ENCODE measurements at regions of chr20 and their contacts with region 1.

Region 1: DNA sequence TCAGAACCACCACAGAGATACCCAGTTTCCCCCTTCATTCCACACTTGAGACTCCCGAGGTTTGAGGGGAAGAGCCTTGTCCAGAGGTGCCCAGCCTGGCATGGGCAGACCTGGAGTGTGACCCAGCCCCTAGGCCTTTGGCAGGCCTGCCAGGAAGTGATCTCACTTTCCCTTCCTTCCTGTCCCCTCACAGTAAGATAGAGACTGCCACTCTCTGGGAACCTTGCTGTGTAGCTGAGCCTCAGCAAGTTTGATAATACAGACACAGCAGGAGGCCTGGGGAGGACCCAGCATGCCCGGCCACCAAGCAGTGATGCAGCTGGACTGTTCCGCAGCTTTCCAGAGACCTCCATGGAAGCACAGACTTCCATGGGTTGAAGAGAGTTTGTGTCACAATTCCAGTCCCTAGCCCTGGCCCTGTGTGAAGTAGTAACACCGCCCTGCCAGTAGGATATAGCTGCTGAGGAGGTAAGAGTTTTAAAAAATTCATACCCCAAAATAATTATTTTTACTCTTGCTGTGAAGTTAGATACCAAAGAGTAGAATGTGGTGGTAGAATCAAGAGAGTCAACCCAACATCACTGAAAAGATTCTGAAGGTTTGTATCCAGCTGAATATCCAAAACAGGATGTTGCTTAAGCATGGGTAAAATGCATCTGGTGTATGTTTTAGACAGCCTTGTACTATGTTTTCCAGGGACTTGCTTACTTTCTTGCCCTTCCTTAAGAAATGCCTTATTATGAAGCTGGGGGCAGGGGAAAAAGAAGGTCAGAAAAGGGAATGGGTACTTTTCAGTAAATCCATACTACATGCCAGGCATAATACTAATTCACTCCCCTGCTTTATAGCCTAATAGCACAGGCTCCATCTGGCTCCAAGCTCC is 16.3 kb downstream of the PKIG start:
- DNase-seq: peak; percentile 92
- H3K4me3 ChIP-seq: no peak overlapping the region
- H3K27ac ChIP-seq: peak overlapping the region; percentile 81
- H3K4me1 ChIP-seq: peaks cover 47% of the 10 kb centered on the region
- H3K27me3 ChIP-seq: no peaks in the 10 kb centered on the region
- CTCF ChIP-seq: peak; percentile 36; the same call in 1 of the 2 replicates

Region 2: DNA sequence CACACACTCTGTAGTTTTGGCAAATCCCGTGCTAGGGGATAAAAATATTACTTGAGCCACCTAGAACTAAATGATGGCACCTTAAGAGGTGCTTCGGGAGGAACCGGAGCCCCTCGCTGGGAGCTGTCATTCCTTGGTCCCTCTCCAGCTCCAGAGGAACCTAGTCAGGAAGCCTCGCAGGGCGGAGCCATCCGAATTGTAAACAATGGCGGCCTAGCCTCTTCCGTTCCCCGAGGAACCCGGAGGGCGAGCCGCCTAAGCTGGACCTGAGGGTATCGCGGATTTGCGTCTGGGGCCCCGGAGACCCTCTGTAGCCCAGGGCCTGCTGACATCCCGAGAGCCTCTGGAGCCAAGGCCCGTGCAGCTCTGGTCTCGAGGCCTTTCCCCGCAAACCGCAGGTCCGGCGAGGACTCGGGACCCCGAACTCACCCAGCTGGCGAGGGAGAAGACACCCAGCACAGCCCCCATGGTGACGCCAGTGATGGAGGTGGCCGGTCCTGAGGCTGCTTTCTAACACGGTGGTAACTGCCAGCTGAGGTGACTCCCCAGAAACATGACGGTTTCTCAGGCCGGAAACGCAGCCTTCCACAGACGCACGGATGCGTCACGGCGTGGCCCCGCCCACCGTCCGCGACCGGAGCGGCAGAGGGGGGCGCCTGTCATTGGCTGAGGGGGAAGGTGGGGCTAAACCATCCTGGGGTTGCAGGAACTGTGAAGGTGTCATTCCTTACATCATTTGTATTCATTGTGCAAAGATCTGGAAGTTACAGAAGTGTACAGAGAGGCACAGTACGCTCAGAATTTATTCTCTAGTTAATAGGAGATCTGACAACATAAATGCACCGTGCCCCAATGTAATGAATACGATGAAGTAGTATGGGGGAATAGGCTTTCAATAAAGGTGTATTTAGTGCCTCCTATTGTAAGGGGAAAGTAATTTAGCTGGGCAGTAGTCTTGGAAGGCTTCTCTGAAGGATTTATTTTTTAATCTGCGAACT is 76.9 kb before region 1 on chr20 and contains the start of gene SERINC3:
- CTCF ChIA-PET with region 1: no interaction called
- POLR2A ChIA-PET with region 1: no interaction called
- intact Hi-C with region 1: loop called (anchors 5 kb)
- DNase-seq: peak; percentile 96
- H3K4me3 ChIP-seq: peak within 1 kb of the TSS; percentile 97
- H3K27ac ChIP-seq: peak within 1 kb of the TSS; percentile 96
- H3K4me1 ChIP-seq: peaks cover 11% of the 10 kb centered on the region
- H3K27me3 ChIP-seq: no peaks in the 10 kb centered on the region
- CTCF ChIP-seq: peak; percentile 40; the same call in 1 of the 2 replicates
- total RNA-seq, gene SERINC3: 48.7 and 50.5 TPM in 2 replicates